ENCODE measurements at regions of chr2 and their contacts with region 1.

Region 1: GRCh38 chr2:226984750-226985582 is 149.1 kb downstream of the RHBDD1 start:
- DNase-seq: no peak
- H3K4me3 ChIP-seq: no peak overlapping the region
- H3K27ac ChIP-seq: peak overlapping the region; percentile 43
- H3K4me1 ChIP-seq: peaks cover 14% of the 10 kb centered on the region
- H3K27me3 ChIP-seq: no peaks in the 10 kb centered on the region
- CTCF ChIP-seq: peak; percentile 78

Region 2: GRCh38 chr2:225670111-225670974 is 1314.6 kb before region 1 on chr2:
- intact Hi-C with region 1: loop called (anchors 10 kb)
- DNase-seq: no peak
- H3K4me3 ChIP-seq: no peak overlapping the region
- H3K27ac ChIP-seq: no peak overlapping the region
- H3K4me1 ChIP-seq: no peaks in the 10 kb centered on the region
- H3K27me3 ChIP-seq: no peaks in the 10 kb centered on the region
- CTCF ChIP-seq: peak; percentile 45

Region 3: DNA sequence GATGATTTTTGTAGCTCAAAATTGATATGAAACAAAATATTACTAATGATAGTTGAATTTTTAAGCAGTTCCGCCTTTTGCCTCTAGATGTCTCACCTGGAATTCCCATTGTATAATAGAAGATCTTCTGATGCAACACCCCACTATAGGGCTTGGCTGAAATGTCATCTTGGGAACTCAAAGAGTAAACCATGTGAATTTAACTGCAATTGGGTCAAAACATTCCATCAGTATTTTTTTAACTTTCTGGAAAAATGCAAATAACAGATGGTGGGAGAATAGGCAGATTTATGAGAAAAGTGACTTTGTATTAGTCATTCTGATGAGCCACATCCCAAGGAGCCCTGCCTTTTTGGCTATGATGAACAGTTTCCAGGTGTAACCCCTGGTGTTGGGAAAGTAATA is 1095.5 kb before region 1 on chr2:
- intact Hi-C with region 1: loop called (anchors 10 kb)
- DNase-seq: no peak
- H3K4me3 ChIP-seq: no peak overlapping the region
- H3K27ac ChIP-seq: no peak overlapping the region
- H3K4me1 ChIP-seq: peaks cover 3% of the 10 kb centered on the region
- H3K27me3 ChIP-seq: no peaks in the 10 kb centered on the region
- CTCF ChIP-seq: peak; percentile 82

Region 4: DNA sequence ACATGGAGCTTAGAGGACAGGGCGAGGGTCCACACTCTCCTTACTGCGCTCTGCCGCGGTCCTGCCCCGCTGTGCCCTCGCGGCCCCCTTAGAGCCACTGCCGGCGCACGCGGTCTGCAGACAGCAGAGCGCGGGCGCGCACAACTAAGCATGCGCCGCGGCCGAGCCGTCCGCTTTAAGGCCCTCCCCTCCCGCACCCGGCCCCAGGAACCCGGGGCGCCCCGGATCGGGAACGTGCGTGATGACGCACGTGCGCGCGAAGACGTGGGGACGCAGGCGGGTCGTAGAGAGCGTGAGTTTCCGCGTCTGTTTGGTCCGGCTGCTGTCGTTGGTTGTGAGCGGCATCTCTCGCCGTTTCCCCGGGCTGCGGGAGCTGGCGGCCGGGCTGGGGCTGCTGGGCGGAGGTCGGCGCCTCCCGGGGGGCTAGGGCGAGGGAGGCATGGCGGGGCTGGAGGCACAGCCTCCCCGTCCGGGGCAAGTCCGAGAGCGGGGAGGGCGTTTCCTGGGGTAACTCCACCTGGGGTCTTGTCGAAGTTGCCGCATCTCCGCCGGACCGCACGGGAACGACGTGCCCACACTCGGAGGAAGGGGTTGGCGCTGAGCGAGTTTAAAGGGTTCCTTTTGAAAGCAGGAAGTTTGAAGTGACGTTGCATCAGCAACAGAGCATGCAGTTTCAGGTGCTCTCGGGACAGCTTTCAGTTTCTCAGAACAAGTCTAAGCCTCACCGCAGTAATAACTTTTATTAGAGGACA is 149.0 kb before region 1 on chr2 and contains the start of gene RHBDD1:
- intact Hi-C with region 1: loop called (anchors 10 kb)
- DNase-seq: peak; percentile 95
- H3K4me3 ChIP-seq: peak within 1 kb of the TSS; percentile 80
- H3K27ac ChIP-seq: peak within 1 kb of the TSS; percentile 95
- H3K4me1 ChIP-seq: peaks cover 32% of the 10 kb centered on the region
- H3K27me3 ChIP-seq: no peaks in the 10 kb centered on the region
- CTCF ChIP-seq: no peak
- total RNA-seq, gene RHBDD1: 35.1 TPM